Gastrocnemius medialis (tissue), 4 donors: ENCODE measurements at regions of chr14 and their contacts with region 1.

Region 1: GRCh38 chr14:23320774-23321571 is at the start of gene PABPN1:
- DNase-seq: peak; percentile 99 to 100
- ATAC-seq: peak; percentile 92 to 96
- H3K4me3 ChIP-seq: peak within 1 kb of the TSS; percentile 90 to 100 (median 96)
- H3K27ac ChIP-seq: peak within 1 kb of the TSS; percentile 98 to 100 (median 99)
- H3K4me1 ChIP-seq: peaks cover 13 to 25% of the 10 kb centered on the region in 2 donors
- H3K27me3 ChIP-seq: no peaks in the 10 kb centered on the region
- CTCF ChIP-seq: no peak
- POLR2A ChIP-seq: peak; percentile 83 to 86
- total RNA-seq, gene PABPN1: 15.7 to 32.8 (median 26.6) TPM

Region 2: GRCh38 chr14:22929104-22929847 is 391.7 kb before region 1 on chr14 and contains the start of gene PRMT5:
- in situ Hi-C with region 1: no loop called
- intact Hi-C with region 1: loop called (anchors 1 kb)
- DNase-seq: peak; percentile 100
- ATAC-seq: peak; percentile 98 to 99
- H3K4me3 ChIP-seq: peak within 1 kb of the TSS; percentile 78 to 95 (median 86)
- H3K27ac ChIP-seq: peak within 1 kb of the TSS; percentile 89 to 96 (median 94)
- H3K4me1 ChIP-seq: peaks cover 9 to 11% of the 10 kb centered on the region in 2 donors
- H3K27me3 ChIP-seq: no peaks in the 10 kb centered on the region
- CTCF ChIP-seq: no peak
- POLR2A ChIP-seq: peak; percentile 84 to 92
- total RNA-seq, gene PRMT5: 67.2 to 83.2 (median 78.6) TPM

Region 3: GRCh38 chr14:23306410-23307145 is 14.4 kb before region 1 on chr14 and contains the start of gene BCL2L2:
- in situ Hi-C with region 1: no loop called
- intact Hi-C with region 1: loop called (anchors 1 kb)
- DNase-seq: peak; percentile 85 to 92
- ATAC-seq: peak; percentile 63 to 66
- H3K4me3 ChIP-seq: peak within 1 kb of the TSS; percentile 66 to 75 (median 68)
- H3K27ac ChIP-seq: peak within 1 kb of the TSS; percentile 85 to 90 (median 86)
- H3K4me1 ChIP-seq: peaks cover 23 to 27% of the 10 kb centered on the region in 2 donors
- H3K27me3 ChIP-seq: no peaks in the 10 kb centered on the region
- CTCF ChIP-seq: no peak
- POLR2A ChIP-seq: peak; percentile 61 to 62
- total RNA-seq, gene BCL2L2: 13.4 to 24.9 (median 23.8) TPM

Region 4: GRCh38 chr14:23345987-23346692 is 25.2 kb after region 1 on chr14:
- in situ Hi-C with region 1: no loop called
- intact Hi-C with region 1: no loop called
- DNase-seq: no peak
- ATAC-seq: no peak
- H3K4me3 ChIP-seq: no peak overlapping the region
- H3K27ac ChIP-seq: no peak overlapping the region
- H3K4me1 ChIP-seq: no peaks in the 10 kb centered on the region
- H3K27me3 ChIP-seq: peaks cover 0 to 4% (median under 1%) of the 10 kb centered on the region in 3 donors
- CTCF ChIP-seq: no peak
- POLR2A ChIP-seq: no peak

Region 5: GRCh38 chr14:23478111-23478759 is 157.3 kb after region 1 on chr14:
- in situ Hi-C with region 1: loop called in 1 of 4 experiments (anchors 10 kb)
- intact Hi-C with region 1: no loop called
- DNase-seq: peak; percentile 25 to 26
- ATAC-seq: peak; percentile 58 to 60
- H3K4me3 ChIP-seq: no peak overlapping the region
- H3K27ac ChIP-seq: no peak overlapping the region
- H3K4me1 ChIP-seq: no peaks in the 10 kb centered on the region
- H3K27me3 ChIP-seq: no peaks in the 10 kb centered on the region
- CTCF ChIP-seq: peak; percentile 62 to 69 (median 67)
- POLR2A ChIP-seq: no peak